IMR-90 (cell line): ENCODE measurements at regions of chr4 and their contacts with region 1.

Region 1: GRCh38 chr4:138680989-138681604 is 334.5 kb upstream of the NOCT start:
- DNase-seq: peak; percentile 79
- ATAC-seq: peak; percentile 87
- H3K4me3 ChIP-seq: no peak overlapping the region
- H3K27ac ChIP-seq: no peak overlapping the region
- H3K4me1 ChIP-seq: peaks cover 3% of the 10 kb centered on the region; the same call in 1 of the 2 replicates
- H3K27me3 ChIP-seq: no peaks in the 10 kb centered on the region
- CTCF ChIP-seq: peak; percentile 91
- POLR2A ChIP-seq: peak; percentile 36; the same call in 1 of the 2 replicates
- RAD21 ChIP-seq: peak; percentile 97

Region 2: DNA sequence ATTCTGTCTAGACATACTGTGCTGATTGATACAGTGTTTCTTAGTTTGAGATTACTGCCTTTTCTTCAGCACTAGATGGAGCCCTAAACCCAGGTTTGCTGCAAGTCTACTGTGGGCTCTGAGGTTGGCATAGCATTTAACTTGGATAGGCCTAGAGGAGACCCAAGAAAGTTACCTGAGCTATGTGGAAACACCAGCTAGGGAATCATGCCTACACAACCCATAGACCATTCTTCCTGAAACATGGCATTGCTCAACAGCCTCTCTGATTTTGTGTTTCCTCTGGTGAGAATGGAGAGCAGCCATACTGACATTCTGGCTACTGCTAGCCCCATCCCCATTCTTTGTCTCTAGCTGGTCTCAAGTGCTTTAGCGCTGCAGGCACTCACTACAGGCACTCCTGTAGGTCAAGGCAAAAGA is 861.1 kb before region 1 on chr4:
- CTCF ChIA-PET with region 1: interaction called, 3 read pairs
- POLR2A ChIA-PET with region 1: no interaction called
- dilution Hi-C with region 1: no loop called
- in situ Hi-C with region 1: loop called (anchors 25 kb)
- intact Hi-C with region 1: loop called (anchors 1 kb)
- DNase-seq: peak; percentile 65
- ATAC-seq: peak; percentile 91
- H3K4me3 ChIP-seq: no peak overlapping the region
- H3K27ac ChIP-seq: no peak overlapping the region
- H3K4me1 ChIP-seq: no peaks in the 10 kb centered on the region
- H3K27me3 ChIP-seq: no peaks in the 10 kb centered on the region
- CTCF ChIP-seq: peak; percentile 74
- POLR2A ChIP-seq: no peak
- RAD21 ChIP-seq: peak; percentile 88

Region 3: DNA sequence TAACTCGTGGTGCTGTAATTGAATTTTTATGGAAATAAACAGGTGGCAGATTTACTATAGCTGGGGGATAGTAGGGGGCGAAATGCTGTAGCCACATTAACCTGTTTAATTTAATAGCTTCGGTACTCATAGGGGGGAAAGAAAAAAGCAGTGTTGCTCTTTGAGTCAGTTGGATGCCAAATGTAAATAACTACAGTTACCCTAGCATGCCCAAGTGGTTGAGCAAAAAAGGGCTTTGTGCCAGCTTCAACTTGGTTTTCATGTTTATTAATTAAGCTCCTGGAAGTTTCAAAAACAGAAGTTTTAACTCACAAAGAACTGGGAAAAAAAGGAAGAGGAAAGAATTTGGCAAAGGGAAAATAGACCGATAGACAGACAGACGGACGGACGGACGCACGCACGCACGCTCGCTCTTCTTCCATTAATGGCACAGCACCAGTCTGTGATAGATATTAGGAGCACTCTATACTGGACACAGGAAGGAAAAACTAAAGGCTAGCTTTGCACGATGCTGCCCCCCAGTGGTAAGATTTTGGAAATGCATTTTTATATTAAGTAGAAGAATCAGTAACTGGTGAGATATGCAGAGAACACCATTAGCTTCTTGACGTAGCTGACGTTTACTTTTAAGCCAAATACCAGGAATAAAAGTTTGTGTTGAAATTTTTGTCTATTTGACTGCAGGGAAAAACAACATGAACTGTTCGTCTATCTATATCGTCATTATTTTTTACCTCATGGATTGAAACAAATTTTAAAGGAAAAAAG is 590.8 kb before region 1 on chr4:
- CTCF ChIA-PET with region 1: no interaction called
- POLR2A ChIA-PET with region 1: no interaction called
- dilution Hi-C with region 1: no loop called
- in situ Hi-C with region 1: no loop called
- intact Hi-C with region 1: loop called (anchors 2 kb)
- DNase-seq: peak; percentile 83
- ATAC-seq: peak; percentile 96
- H3K4me3 ChIP-seq: peak overlapping the region; percentile 34
- H3K27ac ChIP-seq: peak overlapping the region; percentile 57
- H3K4me1 ChIP-seq: 0 out of 2 replicates have a peak, but pooled peaks cover 2% of the 10 kb centered on the region
- H3K27me3 ChIP-seq: no peaks in the 10 kb centered on the region
- CTCF ChIP-seq: peak; percentile 87
- POLR2A ChIP-seq: no peak
- RAD21 ChIP-seq: peak; percentile 93

Region 4: GRCh38 chr4:138188406-138189084 is 492.6 kb before region 1 on chr4:
- CTCF ChIA-PET with region 1: no interaction called
- POLR2A ChIA-PET with region 1: no interaction called
- dilution Hi-C with region 1: no loop called
- in situ Hi-C with region 1: loop called (anchors 10 kb)
- intact Hi-C with region 1: loop called (anchors 5 kb)
- DNase-seq: peak; percentile 39
- ATAC-seq: peak; percentile 30; the same call in 1 of the 2 replicates
- H3K4me3 ChIP-seq: no peak overlapping the region
- H3K27ac ChIP-seq: 0 out of 2 replicates have a peak overlapping the region, but pooled peaks have one; percentile 2
- H3K4me1 ChIP-seq: peaks cover 6% of the 10 kb centered on the region; the same call in 1 of the 2 replicates
- H3K27me3 ChIP-seq: no peaks in the 10 kb centered on the region
- CTCF ChIP-seq: no peak
- POLR2A ChIP-seq: no peak
- RAD21 ChIP-seq: no peak

Region 5: DNA sequence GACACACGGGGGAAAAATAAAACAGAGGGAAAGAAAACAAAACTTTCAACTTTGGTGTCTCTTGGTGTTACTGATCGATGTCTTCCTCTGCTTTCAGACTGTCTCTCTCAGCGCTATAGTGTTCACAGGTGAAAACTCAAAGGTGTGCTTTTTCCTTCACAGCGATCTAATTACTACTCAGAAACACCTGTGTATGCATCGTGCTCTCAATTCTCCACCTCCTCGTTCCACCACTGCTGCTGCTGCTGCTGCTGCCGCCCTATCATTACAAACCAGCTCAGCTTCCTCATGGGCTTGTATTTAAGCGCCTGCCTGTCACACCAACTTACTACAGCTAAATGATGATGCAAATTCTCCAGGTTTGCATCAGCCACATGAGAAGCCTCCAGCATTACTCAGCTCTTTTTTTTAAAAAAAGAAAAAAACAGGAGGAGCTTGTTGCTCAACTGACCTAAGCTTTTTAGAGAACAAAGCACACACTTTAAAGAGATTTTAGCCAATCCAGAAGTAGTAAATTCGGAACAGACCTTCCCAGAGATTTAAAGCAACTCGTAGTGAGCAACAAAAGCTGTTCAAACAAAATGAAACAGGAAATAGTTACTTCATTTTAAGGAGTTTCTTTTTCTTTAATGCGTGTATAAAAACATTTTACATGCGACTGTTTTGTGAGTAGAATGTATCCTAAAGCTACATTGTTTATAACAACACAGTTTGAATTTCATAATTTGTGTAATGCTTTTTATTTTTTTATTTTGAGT is 438.8 kb before region 1 on chr4 and contains the start of gene SLC7A11:
- CTCF ChIA-PET with region 1: no interaction called
- POLR2A ChIA-PET with region 1: no interaction called
- dilution Hi-C with region 1: no loop called
- in situ Hi-C with region 1: no loop called
- intact Hi-C with region 1: loop called (anchors 1 kb)
- DNase-seq: peak; percentile 100
- ATAC-seq: peak; percentile 87
- H3K4me3 ChIP-seq: peak within 1 kb of the TSS; percentile 75
- H3K27ac ChIP-seq: peak within 1 kb of the TSS; percentile 92
- H3K4me1 ChIP-seq: peaks cover 4% of the 10 kb centered on the region; the same call in 1 of the 2 replicates
- H3K27me3 ChIP-seq: no peaks in the 10 kb centered on the region
- CTCF ChIP-seq: 0 out of 2 replicates have a peak, but pooled peaks have one; percentile 3
- POLR2A ChIP-seq: peak; percentile 95
- RAD21 ChIP-seq: peak; percentile 17
- total RNA-seq, gene SLC7A11: 24.7 and 35.6 TPM in 2 replicates

Region 6: GRCh38 chr4:138734746-138735145 is 53.6 kb after region 1 on chr4:
- CTCF ChIA-PET with region 1: no interaction called
- POLR2A ChIA-PET with region 1: no interaction called
- dilution Hi-C with region 1: no loop called
- in situ Hi-C with region 1: no loop called
- intact Hi-C with region 1: no loop called
- DNase-seq: peak; percentile 89
- ATAC-seq: peak; percentile 80
- H3K4me3 ChIP-seq: no peak overlapping the region
- H3K27ac ChIP-seq: no peak overlapping the region
- H3K4me1 ChIP-seq: peaks cover 9% of the 10 kb centered on the region; the same call in 1 of the 2 replicates
- H3K27me3 ChIP-seq: no peaks in the 10 kb centered on the region
- CTCF ChIP-seq: no peak
- POLR2A ChIP-seq: no peak
- RAD21 ChIP-seq: no peak

Region 7: DNA sequence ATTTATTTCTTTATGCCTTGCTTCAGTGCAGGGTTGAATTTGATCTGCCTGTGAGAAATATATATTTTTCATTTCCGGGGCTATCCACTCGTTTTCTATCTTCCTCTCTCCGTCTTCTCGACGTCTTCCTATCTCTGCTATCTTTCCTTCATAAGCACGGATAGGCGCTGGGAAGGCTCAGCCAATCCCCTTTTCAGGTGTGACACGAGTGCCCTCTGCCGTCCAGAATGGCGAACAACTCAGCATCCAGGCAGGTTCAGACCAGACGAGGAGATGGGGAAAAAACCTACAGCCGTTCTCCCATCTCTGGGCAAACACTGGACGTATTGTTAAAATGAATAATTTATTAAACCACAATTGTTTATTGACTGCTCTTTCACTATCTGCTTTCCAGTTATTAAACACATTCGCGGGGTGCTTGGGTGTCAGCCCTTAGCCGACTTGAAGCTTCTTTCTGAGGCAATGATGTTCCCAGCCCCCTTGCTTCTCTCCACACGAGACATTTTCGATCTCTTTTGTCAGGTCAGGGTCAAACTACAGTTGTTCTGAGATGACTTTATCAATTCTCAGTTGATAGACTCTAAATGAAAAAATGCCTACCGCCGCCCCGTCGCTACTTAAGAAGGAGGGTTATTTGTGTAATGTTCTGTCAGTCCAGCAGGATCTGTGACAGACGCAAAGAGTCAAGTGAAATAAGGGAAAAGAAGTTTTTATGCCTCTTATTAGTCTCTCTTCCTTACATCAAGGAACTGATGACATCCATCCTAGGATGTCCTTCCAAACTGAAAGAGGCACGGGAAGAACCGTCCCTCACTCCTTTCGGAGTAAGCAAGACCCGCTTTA is 238.2 kb after region 1 on chr4:
- CTCF ChIA-PET with region 1: no interaction called
- POLR2A ChIA-PET with region 1: no interaction called
- dilution Hi-C with region 1: no loop called
- in situ Hi-C with region 1: no loop called
- intact Hi-C with region 1: loop called (anchors 5 kb)
- DNase-seq: peak; percentile 82
- ATAC-seq: peak; percentile 100
- H3K4me3 ChIP-seq: no peak overlapping the region
- H3K27ac ChIP-seq: no peak overlapping the region
- H3K4me1 ChIP-seq: no peaks in the 10 kb centered on the region
- H3K27me3 ChIP-seq: peaks cover 2% of the 10 kb centered on the region; the same call in 1 of the 2 replicates
- CTCF ChIP-seq: peak; percentile 84
- POLR2A ChIP-seq: 0 out of 2 replicates have a peak, but pooled peaks have one; percentile 25
- RAD21 ChIP-seq: peak; percentile 93